PC-9 (cell line): ENCODE measurements at regions of chr16 and their contacts with region 1.

Region 1: DNA sequence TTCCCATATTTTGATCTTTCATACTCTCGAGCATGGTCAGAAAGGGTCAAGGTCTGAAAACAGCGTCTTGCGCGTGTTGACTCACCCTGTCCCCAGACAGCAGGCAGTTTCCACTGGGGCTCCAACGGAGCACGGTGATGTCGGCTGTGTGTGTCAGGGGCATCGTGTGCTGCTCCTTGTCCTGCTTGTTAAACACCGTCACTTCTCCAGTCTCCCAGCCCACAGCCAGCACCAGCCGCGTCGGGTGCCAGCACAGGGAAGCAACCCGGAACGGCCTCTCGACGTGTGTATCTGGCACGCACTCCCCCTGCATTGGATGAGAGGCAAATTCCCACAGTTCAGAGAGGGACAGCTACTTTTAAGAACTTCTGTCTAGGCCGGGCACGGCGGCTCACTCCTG is 9.6 kb downstream of the IFT140 start:
- DNase-seq: no peak
- H3K4me3 ChIP-seq: no peak overlapping the region
- H3K27ac ChIP-seq: no peak overlapping the region
- H3K4me1 ChIP-seq: no peaks in the 10 kb centered on the region
- H3K27me3 ChIP-seq: no peaks in the 10 kb centered on the region
- CTCF ChIP-seq: no peak

Region 2: GRCh38 chr16:842061-842476 is 760.2 kb before region 1 on chr16:
- CTCF ChIA-PET with region 1: no interaction called
- POLR2A ChIA-PET with region 1: interaction called, 10 read pairs
- intact Hi-C with region 1: no loop called
- DNase-seq: no peak
- H3K4me3 ChIP-seq: no peak overlapping the region
- H3K27ac ChIP-seq: no peak overlapping the region
- H3K4me1 ChIP-seq: no peaks in the 10 kb centered on the region
- H3K27me3 ChIP-seq: peaks cover 75% of the 10 kb centered on the region
- CTCF ChIP-seq: no peak

Region 3: GRCh38 chr16:1424028-1424427 is 178.3 kb before region 1 on chr16:
- CTCF ChIA-PET with region 1: no interaction called
- POLR2A ChIA-PET with region 1: no interaction called
- intact Hi-C with region 1: no loop called
- DNase-seq: no peak
- H3K4me3 ChIP-seq: no peak overlapping the region
- H3K27ac ChIP-seq: no peak overlapping the region
- H3K4me1 ChIP-seq: peaks cover 13% of the 10 kb centered on the region
- H3K27me3 ChIP-seq: no peaks in the 10 kb centered on the region
- CTCF ChIP-seq: no peak

Region 4: DNA sequence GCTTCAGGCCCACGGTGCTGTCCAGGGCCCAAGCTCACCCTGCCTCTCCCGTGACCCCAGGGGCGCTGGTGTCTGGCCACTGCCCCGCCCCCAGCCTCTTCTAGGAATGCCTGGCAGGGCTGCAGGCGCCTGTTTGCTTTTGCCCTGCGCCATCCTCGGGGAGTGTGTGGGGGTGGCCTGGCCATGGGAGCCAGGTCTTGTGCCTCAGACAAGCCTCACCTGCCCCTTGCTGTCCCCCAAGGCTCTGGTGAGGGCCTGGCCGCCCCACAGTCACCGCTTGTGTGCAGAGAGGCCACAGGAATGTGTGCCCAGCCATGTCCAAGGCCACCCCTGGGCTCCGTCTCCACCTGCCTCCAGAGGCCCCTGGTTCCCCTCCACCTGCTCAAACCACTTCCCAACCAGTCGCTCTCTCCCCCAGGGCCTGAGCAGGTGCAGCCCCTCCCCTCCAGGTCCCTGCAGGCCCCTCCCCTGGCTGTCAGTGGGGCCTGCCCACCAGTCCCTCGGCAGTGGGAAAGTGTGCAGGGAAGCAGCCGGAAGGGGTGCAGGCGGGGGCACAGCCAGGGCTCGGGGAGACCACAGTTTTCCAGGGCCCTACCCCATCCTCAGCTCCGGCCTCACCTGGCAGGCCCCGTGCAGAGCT is 192.1 kb after region 1 on chr16:
- CTCF ChIA-PET with region 1: no interaction called
- POLR2A ChIA-PET with region 1: no interaction called
- intact Hi-C with region 1: no loop called
- DNase-seq: no peak
- H3K4me3 ChIP-seq: no peak overlapping the region
- H3K27ac ChIP-seq: no peak overlapping the region
- H3K4me1 ChIP-seq: no peaks in the 10 kb centered on the region
- H3K27me3 ChIP-seq: no peaks in the 10 kb centered on the region
- CTCF ChIP-seq: no peak